Activated B cell treated with CpG ODN at 0.5 μM for 24 hours (primary cell): ENCODE measurements at regions of chr2 and their contacts with region 1.

Region 1: DNA sequence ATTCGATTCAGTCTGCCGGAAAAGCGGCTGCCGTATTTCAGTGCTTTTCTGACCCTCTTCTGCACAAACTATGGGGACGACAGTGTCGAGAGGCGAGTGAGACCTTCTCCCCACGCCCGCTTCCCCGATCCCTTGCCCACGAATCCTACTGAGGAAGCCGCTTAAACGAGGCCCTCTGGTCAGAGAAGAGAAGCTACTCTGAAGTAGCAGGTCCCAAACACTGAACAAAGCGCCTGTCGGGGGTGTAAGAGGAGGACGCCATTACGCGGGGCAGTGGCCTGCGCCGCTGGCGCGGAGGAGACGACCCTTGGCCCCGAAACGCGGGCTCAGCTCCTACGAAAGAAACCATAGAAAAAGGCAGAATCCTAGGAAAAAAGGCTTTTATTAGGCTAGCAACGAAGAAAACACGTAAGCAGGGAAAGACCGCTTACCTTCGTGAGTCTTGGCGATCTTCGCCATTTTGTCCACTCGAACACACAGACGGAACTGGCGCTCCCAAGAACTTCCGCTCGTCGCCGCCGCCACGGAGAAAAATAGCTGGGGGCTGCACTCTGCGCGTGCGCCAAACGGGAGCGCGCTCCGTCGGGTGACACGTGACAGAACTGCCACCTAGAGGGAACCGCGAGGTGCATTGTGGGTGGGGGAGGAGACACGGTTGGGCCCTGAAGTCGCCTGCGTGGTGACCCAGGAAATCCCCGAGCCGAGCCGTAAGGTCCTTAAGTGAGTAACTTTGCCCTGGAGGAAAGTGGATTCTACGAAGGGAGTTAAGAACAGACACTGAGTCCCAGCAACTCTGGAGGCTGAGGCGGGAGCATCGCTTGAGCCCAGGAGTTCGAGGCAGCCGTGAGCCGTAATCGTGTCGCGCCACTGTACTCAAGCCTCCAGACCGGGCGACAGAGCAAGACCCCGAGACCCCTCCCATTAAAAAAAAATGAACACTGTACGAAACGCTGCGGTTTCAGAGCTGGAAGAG is at the start of gene SF3B1:
- DNase-seq: peak; percentile 98
- ATAC-seq: peak; percentile 96
- H3K4me3 Mint-ChIP-seq: peak within 1 kb of the TSS; percentile 99
- H3K27ac Mint-ChIP-seq: peak within 1 kb of the TSS; percentile 100
- H3K4me1 Mint-ChIP-seq: peaks cover 62% of the 10 kb centered on the region
- H3K27me3 Mint-ChIP-seq: no peaks in the 10 kb centered on the region
- CTCF ChIP-seq: no peak
- total RNA-seq, gene SF3B1: 328 and 380 TPM in 2 replicates

Region 2: GRCh38 chr2:195575879-195576401 is 1858.9 kb before region 1 on chr2:
- CTCF ChIA-PET with region 1: no interaction called
- POLR2A ChIA-PET with region 1: no interaction called
- intact Hi-C with region 1: no loop called
- DNase-seq: no peak
- ATAC-seq: peak; percentile 79
- H3K4me3 Mint-ChIP-seq: peak overlapping the region; percentile 70
- H3K27ac Mint-ChIP-seq: peak overlapping the region; percentile 76
- H3K4me1 Mint-ChIP-seq: peaks cover 50% of the 10 kb centered on the region
- H3K27me3 Mint-ChIP-seq: no peaks in the 10 kb centered on the region
- CTCF ChIP-seq: no peak

Region 3: DNA sequence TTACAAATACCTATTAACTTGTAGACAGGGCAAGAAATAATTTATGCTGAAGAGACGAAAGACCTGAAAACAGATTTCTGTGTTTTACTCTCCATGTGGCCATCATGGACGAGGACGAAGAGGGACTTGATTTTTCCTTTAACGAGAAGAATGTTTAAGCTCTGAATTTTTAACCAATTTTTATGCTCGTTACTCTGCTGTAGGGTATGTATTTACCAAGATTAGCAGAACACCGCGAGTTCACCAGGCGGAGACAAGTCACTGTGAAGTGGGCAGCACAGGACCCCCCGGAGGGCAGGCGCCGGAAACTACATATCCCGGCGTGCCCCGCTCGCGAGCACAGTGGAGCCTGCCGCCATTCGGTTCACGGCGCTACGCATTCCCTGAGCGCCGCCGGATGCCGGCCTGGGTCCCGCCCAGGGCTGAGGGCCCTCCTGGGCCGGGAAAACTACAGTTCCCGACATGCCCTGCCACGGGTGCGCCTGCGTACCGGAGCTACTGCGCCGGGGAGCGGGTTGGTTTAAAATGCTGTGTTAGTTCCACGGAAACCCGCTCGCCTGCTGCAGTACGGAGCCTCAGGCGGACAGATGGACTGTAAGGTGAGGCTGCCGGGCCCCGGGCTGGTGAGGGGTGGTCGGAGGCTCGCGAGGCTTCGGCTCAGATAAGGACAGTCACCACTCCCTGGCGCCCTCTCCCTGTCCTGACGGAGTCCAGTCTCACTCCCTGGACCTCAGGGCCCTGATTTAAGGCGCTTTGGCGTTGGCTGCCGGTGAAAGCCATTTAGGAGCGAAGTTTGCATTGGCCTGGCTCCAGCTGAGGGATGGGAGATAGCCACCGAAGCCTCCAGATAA is 795.4 kb before region 1 on chr2 and contains the start of gene CCDC150:
- CTCF ChIA-PET with region 1: interaction called, 3 read pairs
- POLR2A ChIA-PET with region 1: no interaction called
- intact Hi-C with region 1: loop called (anchors 1 kb)
- DNase-seq: peak; percentile 90
- ATAC-seq: peak; percentile 100
- H3K4me3 Mint-ChIP-seq: peak within 1 kb of the TSS; percentile 89
- H3K27ac Mint-ChIP-seq: peak within 1 kb of the TSS; percentile 53
- H3K4me1 Mint-ChIP-seq: peaks cover 14% of the 10 kb centered on the region
- H3K27me3 Mint-ChIP-seq: no peaks in the 10 kb centered on the region
- CTCF ChIP-seq: no peak
- total RNA-seq, gene CCDC150: 2.3 and 2.6 TPM in 2 replicates

Region 4: GRCh38 chr2:196798980-196799379 is 635.8 kb before region 1 on chr2:
- CTCF ChIA-PET with region 1: no interaction called
- POLR2A ChIA-PET with region 1: interaction called, 13 read pairs
- intact Hi-C with region 1: no loop called
- DNase-seq: no peak
- ATAC-seq: no peak
- H3K4me3 Mint-ChIP-seq: peak overlapping the region; percentile 97
- H3K27ac Mint-ChIP-seq: peak overlapping the region; percentile 92
- H3K4me1 Mint-ChIP-seq: peaks cover 18% of the 10 kb centered on the region
- H3K27me3 Mint-ChIP-seq: peaks cover 7% of the 10 kb centered on the region
- CTCF ChIP-seq: no peak

Region 5: DNA sequence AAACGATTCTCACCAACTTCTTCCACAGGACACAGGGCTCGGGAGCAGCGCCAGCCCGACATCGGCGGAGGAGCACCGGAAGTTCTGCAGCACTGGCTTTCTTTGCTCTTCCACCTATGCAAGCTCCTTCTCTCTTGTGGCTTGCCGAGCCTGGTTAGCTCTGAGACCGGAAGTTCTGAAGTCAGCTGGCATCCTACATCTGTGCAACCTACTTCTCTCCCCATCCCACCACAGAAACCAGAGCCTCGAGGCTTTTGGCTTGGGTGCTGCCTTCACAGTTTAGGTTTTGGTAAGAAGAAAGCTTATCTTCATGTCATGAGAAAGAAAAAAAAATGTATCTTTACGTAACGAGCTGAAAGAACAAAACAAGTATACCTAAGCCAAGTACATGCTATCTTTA is 235.9 kb before region 1 on chr2:
- CTCF ChIA-PET with region 1: no interaction called
- POLR2A ChIA-PET with region 1: no interaction called
- intact Hi-C with region 1: loop called (anchors 5 kb)
- DNase-seq: peak; percentile 56
- ATAC-seq: peak; percentile 94
- H3K4me3 Mint-ChIP-seq: peak overlapping the region; percentile 88
- H3K27ac Mint-ChIP-seq: peak overlapping the region; percentile 96
- H3K4me1 Mint-ChIP-seq: peaks cover 83% of the 10 kb centered on the region
- H3K27me3 Mint-ChIP-seq: no peaks in the 10 kb centered on the region
- CTCF ChIP-seq: no peak

Region 6: GRCh38 chr2:197515739-197516392 is 81.0 kb after region 1 on chr2 and contains the start of gene MOB4:
- CTCF ChIA-PET with region 1: no interaction called
- POLR2A ChIA-PET with region 1: interaction called, 25 read pairs
- intact Hi-C with region 1: loop called (anchors 1 kb)
- DNase-seq: peak; percentile 96
- ATAC-seq: peak; percentile 95
- H3K4me3 Mint-ChIP-seq: peak within 1 kb of the TSS; percentile 96
- H3K27ac Mint-ChIP-seq: peak within 1 kb of the TSS; percentile 95
- H3K4me1 Mint-ChIP-seq: peaks cover 33% of the 10 kb centered on the region
- H3K27me3 Mint-ChIP-seq: no peaks in the 10 kb centered on the region
- CTCF ChIP-seq: no peak
- total RNA-seq, gene MOB4: 21.7 and 22.1 TPM in 2 replicates

Region 7: GRCh38 chr2:197777823-197778407 is 343.1 kb after region 1 on chr2:
- CTCF ChIA-PET with region 1: no interaction called
- POLR2A ChIA-PET with region 1: no interaction called
- intact Hi-C with region 1: loop called (anchors 1 kb)
- DNase-seq: no peak
- ATAC-seq: no peak
- H3K4me3 Mint-ChIP-seq: no peak overlapping the region
- H3K27ac Mint-ChIP-seq: no peak overlapping the region
- H3K4me1 Mint-ChIP-seq: no peaks in the 10 kb centered on the region
- H3K27me3 Mint-ChIP-seq: peaks cover 7% of the 10 kb centered on the region
- CTCF ChIP-seq: peak; percentile 23

Region 8: GRCh38 chr2:198630384-198630783 is 1195.6 kb after region 1 on chr2:
- CTCF ChIA-PET with region 1: no interaction called
- POLR2A ChIA-PET with region 1: no interaction called
- intact Hi-C with region 1: no loop called
- DNase-seq: no peak
- ATAC-seq: no peak
- H3K4me3 Mint-ChIP-seq: no peak overlapping the region
- H3K27ac Mint-ChIP-seq: no peak overlapping the region
- H3K4me1 Mint-ChIP-seq: no peaks in the 10 kb centered on the region
- H3K27me3 Mint-ChIP-seq: no peaks in the 10 kb centered on the region
- CTCF ChIP-seq: no peak